B cell (primary cell): ENCODE measurements at regions of chr3 and their contacts with region 1.

Region 1: DNA sequence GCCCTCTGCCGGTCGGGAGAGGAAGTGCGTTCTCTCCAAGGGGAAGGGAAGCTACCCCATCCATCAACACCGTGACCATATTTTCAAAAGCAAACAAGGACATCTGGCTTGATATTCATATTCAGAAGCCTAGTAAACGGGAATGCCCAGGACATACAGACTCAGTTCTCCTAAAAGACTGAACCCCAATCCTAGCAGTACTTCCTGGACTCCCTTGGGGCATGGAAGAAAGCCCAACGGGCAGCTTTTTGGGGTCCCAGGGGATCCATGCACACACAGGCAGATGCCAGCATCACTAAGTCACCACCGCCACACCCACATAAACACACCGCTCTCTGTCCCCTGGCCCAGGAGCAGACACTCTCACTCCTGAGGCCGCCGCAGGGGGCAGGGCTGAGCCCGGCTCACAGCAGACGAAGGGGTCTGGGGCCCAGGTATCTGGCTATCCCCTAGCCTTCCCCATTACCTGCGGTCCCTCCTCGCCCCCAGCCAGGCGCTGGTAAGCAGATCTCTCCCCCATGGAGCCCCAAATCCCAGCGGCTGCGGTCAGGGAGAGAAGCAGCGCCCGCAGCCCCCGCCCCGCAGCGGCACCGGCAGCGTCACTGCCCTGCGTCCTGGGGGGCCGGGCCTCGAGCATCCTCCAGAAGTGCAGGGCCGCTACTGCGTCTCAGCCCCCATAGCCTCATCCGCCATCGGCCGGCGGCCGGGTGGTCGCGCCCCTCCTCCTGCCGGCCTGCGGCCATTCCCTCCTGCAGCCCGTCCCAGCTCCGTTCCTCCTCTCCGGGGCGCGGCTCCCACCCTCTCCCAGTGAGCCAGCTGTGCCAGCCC is 13.4 kb downstream of the TNK2 start:
- DNase-seq: peak; percentile 85
- ATAC-seq: peak; percentile 68
- H3K4me3 ChIP-seq: peak overlapping the region; percentile 63 to 79 (median 74)
- H3K4me3 Mint-ChIP-seq: peak overlapping the region; percentile 95
- H3K27ac ChIP-seq: peak overlapping the region; percentile 75 to 87
- H3K27ac Mint-ChIP-seq: peak overlapping the region; percentile 95
- H3K4me1 ChIP-seq: peaks cover 49 to 58% of the 10 kb centered on the region in 2 donors
- H3K4me1 Mint-ChIP-seq: peaks cover 52% of the 10 kb centered on the region
- H3K27me3 ChIP-seq: no peaks in the 10 kb centered on the region
- H3K27me3 Mint-ChIP-seq: no peaks in the 10 kb centered on the region
- CTCF ChIP-seq: peak; percentile 77

Region 2: DNA sequence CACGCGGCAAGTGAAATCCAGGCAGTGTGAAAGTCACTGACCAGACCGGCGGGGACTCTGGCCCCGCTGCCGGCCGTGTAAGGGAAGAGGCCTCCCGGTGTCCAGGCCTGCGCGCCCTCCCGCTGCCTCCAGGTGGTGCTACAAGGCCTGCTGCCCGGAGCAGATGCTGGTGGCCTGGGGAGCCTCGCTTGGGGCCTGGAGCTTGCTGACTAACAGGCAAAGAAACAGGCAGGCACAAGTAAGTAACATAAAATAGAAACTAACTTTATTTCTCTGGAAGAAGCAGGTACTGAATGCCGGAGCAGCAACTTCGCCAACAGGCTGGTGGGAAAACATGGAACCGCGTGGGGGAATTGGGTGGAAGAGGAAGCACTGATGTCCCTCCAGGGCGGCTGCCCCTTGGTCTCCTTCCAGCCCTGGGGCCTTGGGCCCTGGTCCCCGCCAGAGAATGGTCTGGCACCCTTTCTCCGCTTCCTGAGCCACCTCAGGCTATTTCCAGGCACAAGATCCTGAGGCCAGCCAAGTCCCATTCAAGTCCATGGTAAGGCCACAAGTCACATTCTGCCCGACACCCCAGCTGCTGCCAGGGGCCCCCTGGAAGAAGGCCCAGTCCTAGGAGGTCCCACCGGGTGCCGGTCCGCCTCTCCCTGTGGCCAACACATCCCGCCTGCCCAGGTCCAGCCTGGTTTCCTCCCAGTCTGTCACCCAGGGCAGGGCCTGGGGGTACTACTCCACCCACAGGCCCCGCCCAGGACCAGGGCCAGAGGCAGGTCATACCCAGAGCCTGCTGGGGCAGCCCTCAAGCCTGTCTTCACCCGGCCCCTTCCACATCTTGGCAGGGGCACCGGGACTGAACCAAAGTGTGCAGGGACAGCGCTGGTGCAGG is 31.6 kb before region 1 on chr3:
- CTCF ChIA-PET with region 1: interaction called, 95 read pairs
- POLR2A ChIA-PET with region 1: interaction called, 4 read pairs
- intact Hi-C with region 1: loop called (anchors 1 kb)
- DNase-seq: peak; percentile 73
- ATAC-seq: peak; percentile 82
- H3K4me3 ChIP-seq: no peak overlapping the region
- H3K4me3 Mint-ChIP-seq: no peak overlapping the region
- H3K27ac ChIP-seq: no peak overlapping the region
- H3K27ac Mint-ChIP-seq: peak overlapping the region; percentile 26
- H3K4me1 ChIP-seq: peaks cover 0 to 7% of the 10 kb centered on the region in 2 donors
- H3K4me1 Mint-ChIP-seq: peaks cover 11% of the 10 kb centered on the region
- H3K27me3 ChIP-seq: peaks cover 0 to 3% (median 0%) of the 10 kb centered on the region in 4 experiments
- H3K27me3 Mint-ChIP-seq: no peaks in the 10 kb centered on the region
- CTCF ChIP-seq: peak; percentile 90